Dendritic cell treated with granulocyte-macrophage colony-stimulating factor and Interleukin-4, amounts not matched to agents 40 ng/mL and 50 ng/mL, for 4 days (primary cell): ENCODE measurements at regions of chr13 and their contacts with region 1.

Region 1: GRCh38 chr13:25267715-25268114 is 19.6 kb downstream of the MTMR6 start:
- H3K4me3 Mint-ChIP-seq: no peak overlapping the region
- H3K27ac Mint-ChIP-seq: peak overlapping the region; percentile 39
- H3K4me1 Mint-ChIP-seq: peaks cover 13% of the 10 kb centered on the region
- H3K27me3 Mint-ChIP-seq: no peaks in the 10 kb centered on the region

Region 2: DNA sequence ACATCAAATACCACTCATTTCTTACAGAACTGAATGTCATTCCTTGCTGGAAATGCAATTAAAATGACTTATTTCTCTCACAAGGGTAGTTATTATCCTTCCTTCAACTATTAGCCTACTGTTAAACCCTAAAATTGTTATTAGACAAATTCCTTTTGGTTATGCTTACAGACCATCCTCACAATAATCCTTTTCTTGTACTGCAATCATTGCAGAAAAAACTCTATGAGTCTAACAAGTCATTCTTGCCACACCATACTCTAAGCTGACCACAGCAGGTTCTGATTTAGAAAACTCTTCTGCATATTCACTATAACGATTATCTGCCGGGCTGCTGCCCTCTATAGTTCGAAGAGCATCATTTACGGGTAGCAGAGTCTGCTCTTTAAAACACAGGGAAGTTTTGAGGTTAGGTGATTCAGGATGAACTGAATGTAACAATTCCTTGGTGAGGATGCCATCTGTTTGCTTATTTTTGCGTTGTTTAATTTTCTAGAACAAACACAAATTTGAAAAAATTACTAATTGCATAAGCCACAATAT is 18.6 kb before region 1 on chr13:
- intact Hi-C with region 1: no loop called
- H3K4me3 Mint-ChIP-seq: no peak overlapping the region
- H3K27ac Mint-ChIP-seq: no peak overlapping the region
- H3K4me1 Mint-ChIP-seq: peaks cover 20% of the 10 kb centered on the region
- H3K27me3 Mint-ChIP-seq: no peaks in the 10 kb centered on the region

Region 3: GRCh38 chr13:25286969-25287961 is 19.6 kb after region 1 on chr13 and contains the start of gene MTMR6:
- intact Hi-C with region 1: loop called (anchors 1 kb)
- H3K4me3 Mint-ChIP-seq: peak within 1 kb of the TSS; percentile 95
- H3K27ac Mint-ChIP-seq: peak within 1 kb of the TSS; percentile 98
- H3K4me1 Mint-ChIP-seq: peaks cover 55% of the 10 kb centered on the region
- H3K27me3 Mint-ChIP-seq: peaks cover 2% of the 10 kb centered on the region

Region 4: GRCh38 chr13:25301347-25302047 is 33.8 kb after region 1 on chr13 and contains the start of gene NUP58:
- intact Hi-C with region 1: loop called (anchors 5 kb)
- H3K4me3 Mint-ChIP-seq: peak within 1 kb of the TSS; percentile 86
- H3K27ac Mint-ChIP-seq: peak within 1 kb of the TSS; percentile 89
- H3K4me1 Mint-ChIP-seq: peaks cover 50% of the 10 kb centered on the region
- H3K27me3 Mint-ChIP-seq: peaks cover 8% of the 10 kb centered on the region

Region 5: DNA sequence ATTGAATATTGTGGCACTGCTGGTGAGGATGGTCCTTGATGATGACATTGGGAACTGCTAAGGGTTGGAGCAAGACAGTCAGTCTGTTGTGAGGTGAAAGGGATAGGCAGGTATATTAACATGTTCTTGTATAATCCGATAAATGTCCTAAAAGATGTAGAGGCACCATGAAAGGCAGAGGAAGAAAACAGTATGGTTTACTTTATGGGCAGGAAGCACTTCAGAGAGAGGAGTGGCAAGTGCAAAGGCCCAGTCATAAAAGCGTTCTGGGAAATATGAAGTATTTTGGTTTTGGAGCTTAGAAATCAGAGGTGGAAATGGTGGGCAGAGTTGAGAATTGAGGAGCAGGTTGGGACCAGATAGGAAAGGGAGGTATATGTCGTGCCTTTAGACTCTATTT is 43.2 kb after region 1 on chr13:
- intact Hi-C with region 1: loop called (anchors 5 kb)
- H3K4me3 Mint-ChIP-seq: no peak overlapping the region
- H3K27ac Mint-ChIP-seq: peak overlapping the region; percentile 83
- H3K4me1 Mint-ChIP-seq: peaks cover 34% of the 10 kb centered on the region
- H3K27me3 Mint-ChIP-seq: no peaks in the 10 kb centered on the region